ENCODE measurements at regions of chr15 and their contacts with region 1.

Region 1: DNA sequence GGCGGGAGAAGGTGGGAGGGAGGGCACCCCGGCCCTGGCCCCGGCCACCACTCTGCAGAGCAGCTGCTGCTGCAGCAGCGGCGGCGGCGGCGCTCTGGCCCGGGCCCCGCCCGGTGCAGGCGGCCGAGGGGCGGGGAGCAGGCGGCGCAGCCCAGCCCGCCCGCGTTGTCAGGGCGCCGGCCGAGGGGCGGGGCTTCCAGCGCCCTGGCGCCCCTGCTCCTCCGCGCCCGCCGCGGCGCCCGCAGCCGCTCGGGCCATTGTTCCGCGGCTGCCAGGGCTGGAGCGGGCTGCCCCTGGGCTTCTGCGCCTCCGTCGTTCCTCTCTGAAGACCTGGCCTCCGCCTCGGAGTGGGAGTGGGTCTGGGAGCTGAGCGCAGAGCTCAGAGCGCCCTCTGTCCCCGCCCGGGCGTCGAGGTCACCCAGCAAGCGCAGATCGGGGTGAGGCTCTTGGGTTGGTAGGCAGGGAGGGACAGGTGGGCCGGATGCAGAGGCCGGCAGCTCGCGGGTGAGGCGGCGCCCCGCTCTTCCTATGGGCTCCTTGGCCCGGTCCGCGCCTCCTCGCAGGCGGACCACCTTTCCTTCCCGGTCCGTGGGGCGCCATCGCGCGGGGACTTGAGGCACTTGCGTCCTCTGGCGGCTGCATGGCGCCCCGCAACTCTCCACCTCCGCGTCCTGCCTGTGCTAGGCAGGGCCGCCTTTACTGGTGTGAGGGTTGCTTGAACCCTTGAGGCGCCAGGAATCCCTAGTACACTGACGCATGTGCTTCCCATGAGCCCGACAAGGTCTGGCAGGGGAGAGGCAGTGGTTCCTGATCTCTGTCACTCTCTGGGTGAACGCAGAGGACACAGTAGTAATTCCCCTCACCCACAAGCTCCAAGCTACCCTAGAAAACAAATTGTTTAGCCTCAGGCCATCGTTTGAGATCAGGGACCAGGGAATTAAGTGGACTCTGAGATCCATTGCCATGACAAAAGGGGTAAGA is at the start of gene LPCAT4:
- DNase-seq: peak; percentile 95
- CTCF ChIP-seq: peak; percentile 97

Region 2: DNA sequence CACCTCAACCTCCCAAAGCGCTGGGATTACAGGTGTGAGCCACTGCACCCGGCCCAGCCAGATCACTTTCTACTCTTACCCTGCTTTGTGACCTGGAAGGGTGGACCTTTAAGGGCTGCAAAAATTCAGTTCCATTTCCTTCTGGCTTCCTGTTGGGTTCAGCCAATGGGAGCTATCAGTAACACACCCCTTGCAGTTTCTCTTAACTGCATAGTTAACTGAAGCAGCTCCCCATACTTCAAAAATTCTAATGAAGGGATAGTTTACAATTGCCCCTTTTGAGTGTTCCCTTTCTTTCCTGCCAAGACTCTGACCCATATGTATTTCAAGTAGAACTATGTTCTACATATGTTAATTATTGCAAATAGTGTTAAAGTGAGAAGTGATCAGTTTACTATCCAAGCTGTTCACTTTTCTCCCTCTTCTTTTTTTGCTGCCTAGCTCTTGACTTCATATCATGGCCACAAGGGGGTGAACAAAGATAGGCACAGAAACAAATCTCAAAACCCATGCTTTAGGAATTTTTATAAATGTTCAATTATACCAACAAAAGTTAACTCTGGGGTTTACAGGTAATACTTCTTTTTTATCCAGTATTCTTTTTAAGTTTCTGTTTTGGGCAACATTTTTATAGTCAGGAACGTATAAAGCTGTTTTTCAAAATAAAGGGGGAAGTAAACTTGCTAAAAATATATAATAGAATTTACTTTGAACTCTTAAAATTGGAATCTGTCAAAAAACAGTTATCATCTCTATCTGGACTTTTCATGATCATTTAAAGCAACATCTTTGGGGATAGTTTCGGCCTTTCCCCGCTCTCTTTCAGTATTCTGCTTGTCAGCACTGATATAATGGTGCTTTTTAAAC is 257.4 kb before region 1 on chr15:
- CTCF ChIA-PET with region 1: interaction called, 14 read pairs
- POLR2A ChIA-PET with region 1: no interaction called
- DNase-seq: peak; percentile 31
- CTCF ChIP-seq: peak; percentile 66

Region 3: GRCh38 chr15:34241372-34242330 is 125.7 kb before region 1 on chr15:
- CTCF ChIA-PET with region 1: interaction called, 28 read pairs
- POLR2A ChIA-PET with region 1: no interaction called
- DNase-seq: peak; percentile 62
- CTCF ChIP-seq: peak; percentile 53

Region 4: DNA sequence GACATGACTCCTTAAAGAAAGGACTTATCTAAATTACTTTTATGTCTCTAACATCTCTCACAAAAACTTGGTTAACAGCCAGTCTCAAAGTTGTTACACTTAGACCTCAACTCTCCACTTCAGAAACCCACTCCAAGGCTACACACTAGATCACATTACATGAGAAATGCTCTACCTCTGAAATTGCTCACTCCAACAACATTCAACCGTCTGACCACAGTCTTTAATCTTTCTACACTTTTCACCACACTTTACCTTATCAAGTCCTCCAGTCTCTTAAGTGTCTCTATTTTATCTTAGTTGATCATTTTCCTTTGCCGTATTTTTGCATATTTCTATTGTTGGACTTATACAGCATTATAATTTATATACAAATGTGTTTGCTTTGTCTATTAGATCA is 35.6 kb before region 1 on chr15:
- CTCF ChIA-PET with region 1: interaction called, 30 read pairs
- POLR2A ChIA-PET with region 1: interaction called, 5 read pairs
- DNase-seq: no peak
- CTCF ChIP-seq: no peak

Region 5: DNA sequence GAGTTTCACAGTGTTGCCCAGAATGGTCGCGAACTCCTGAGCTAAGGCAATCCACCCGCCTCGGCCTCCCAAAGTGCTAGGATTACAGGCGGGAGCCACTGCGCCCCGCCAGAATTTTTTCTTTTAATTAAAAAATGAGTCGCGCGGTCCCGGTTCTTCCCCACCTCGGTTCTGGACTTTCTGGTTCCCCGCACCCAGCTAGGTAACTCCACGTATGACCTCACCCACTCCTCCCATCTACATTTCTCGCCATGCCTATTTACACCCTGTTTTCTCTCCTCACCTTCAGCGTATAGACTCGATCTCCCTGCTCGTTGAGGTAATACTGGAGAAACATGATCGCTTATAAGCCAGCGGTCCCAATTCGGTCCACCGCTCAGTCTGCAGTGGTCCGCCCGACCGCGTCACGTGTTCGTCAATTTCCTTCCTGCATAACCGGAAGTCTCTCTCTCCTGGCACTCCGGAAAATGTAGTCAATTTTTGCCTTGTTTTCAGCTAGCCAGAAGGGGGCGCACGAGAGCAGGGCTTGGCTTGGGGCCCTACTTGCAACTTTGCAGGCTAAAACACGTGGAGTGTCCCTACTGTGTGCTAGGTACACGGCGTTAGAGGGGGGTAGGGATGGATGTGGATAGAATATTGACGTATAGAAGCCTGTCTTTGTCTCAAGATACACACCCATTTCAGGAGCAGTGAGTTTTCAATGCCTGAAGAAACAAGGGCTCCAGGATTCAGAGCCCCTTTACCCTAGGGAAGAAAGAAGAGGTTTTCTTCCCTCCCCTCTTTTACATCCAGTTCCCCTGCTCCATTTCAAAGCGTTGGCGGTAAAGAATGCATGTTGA is 24.4 kb before region 1 on chr15 and contains the starts of genes NOP10 and NUTM1:
- CTCF ChIA-PET with region 1: interaction called, 33 read pairs
- POLR2A ChIA-PET with region 1: no interaction called
- DNase-seq: peak; percentile 82
- CTCF ChIP-seq: peak; percentile 94

Measured in GM10248 (cell line).